ENCODE measurements at regions of chr14 and their contacts with region 1.

Region 1: DNA sequence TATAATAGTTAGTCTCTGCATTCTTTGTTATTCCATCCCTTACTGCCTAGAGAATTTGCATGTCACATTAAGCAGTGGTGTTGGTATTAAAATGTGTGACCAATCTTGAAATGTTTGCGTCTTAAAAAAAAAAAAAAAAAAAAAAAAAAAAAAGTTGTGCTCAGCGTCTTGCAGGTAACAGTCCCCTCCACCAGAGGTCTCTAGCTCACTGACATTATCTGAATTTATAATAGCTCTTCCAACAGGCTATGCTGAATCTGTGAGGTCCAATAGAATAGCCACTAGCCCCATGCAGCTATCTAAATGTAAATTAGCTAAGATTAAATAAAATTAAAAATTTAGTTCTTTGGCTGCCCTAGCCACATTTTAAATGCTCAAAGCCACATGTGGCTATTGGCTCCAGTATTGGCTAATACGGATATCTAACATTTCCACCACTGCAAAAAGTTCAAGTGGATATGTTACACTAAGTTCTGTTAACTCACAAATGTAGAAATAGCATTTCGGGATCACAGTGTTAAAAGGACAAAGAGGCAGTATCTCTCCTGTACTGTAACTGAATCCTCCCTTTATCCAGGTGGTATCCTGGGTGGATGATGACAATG is 28.7 kb downstream of the NKX2-8 start:
- DNase-seq: peak; percentile 61
- H3K4me3 Mint-ChIP-seq: no peak overlapping the region
- H3K27ac Mint-ChIP-seq: no peak overlapping the region
- H3K4me1 Mint-ChIP-seq: peaks cover 5% of the 10 kb centered on the region
- H3K27me3 Mint-ChIP-seq: no peaks in the 10 kb centered on the region
- CTCF ChIP-seq: peak; percentile 56

Region 2: DNA sequence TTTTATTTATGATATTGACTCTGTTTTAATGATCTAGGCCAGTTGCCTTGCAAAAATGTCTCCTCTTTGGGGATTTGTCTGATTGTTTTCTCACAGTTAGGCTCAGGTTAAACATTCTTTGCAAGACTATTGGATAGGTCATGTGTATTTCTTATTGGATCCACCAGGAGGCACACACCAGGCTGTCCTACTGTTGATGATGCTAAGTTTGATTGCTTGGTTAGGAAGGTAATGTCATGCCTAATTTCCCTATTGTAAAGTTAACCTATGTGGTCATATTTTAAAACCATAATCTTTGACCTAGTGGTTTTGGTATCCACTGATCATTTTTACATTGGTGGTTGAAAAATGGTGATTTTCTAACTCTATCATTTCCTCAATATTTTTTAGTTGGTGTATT is 590.5 kb before region 1 on chr14:
- CTCF ChIA-PET with region 1: interaction called, 3 read pairs
- POLR2A ChIA-PET with region 1: no interaction called
- intact Hi-C with region 1: loop called (anchors 5 kb)
- DNase-seq: peak; percentile 32
- H3K4me3 Mint-ChIP-seq: no peak overlapping the region
- H3K27ac Mint-ChIP-seq: no peak overlapping the region
- H3K4me1 Mint-ChIP-seq: no peaks in the 10 kb centered on the region
- H3K27me3 Mint-ChIP-seq: no peaks in the 10 kb centered on the region
- CTCF ChIP-seq: peak; percentile 21

Region 3: GRCh38 chr14:36207500-36207899 is 346.3 kb before region 1 on chr14:
- CTCF ChIA-PET with region 1: no interaction called
- POLR2A ChIA-PET with region 1: no interaction called
- intact Hi-C with region 1: loop called (anchors 1 kb)
- DNase-seq: peak; percentile 22
- H3K4me3 Mint-ChIP-seq: no peak overlapping the region
- H3K27ac Mint-ChIP-seq: no peak overlapping the region
- H3K4me1 Mint-ChIP-seq: no peaks in the 10 kb centered on the region
- H3K27me3 Mint-ChIP-seq: no peaks in the 10 kb centered on the region
- CTCF ChIP-seq: peak; percentile 48

Region 4: GRCh38 chr14:36281309-36281708 is 272.4 kb before region 1 on chr14:
- CTCF ChIA-PET with region 1: no interaction called
- POLR2A ChIA-PET with region 1: no interaction called
- intact Hi-C with region 1: no loop called
- DNase-seq: no peak
- H3K4me3 Mint-ChIP-seq: no peak overlapping the region
- H3K27ac Mint-ChIP-seq: no peak overlapping the region
- H3K4me1 Mint-ChIP-seq: no peaks in the 10 kb centered on the region
- H3K27me3 Mint-ChIP-seq: peaks cover 12% of the 10 kb centered on the region
- CTCF ChIP-seq: no peak

Region 5: DNA sequence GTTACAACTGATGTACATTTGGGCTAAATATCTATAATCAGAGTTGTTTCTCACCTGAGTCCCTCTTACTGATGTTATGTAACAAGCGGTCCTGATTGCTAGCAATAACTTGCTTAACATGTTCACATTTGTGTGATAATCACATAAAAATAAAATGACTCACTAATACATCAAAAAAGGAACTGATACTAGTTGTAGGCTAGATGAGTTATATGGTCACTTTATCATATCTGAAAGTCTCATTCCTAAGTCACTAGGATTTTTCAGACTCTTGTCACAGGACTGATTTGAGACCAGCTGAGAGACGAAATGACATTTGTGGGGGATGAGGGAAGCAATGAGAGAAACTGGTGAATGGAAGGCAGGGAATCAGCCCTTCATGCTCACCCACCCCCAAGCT is 68.0 kb before region 1 on chr14:
- CTCF ChIA-PET with region 1: no interaction called
- POLR2A ChIA-PET with region 1: no interaction called
- intact Hi-C with region 1: no loop called
- DNase-seq: no peak
- H3K4me3 Mint-ChIP-seq: no peak overlapping the region
- H3K27ac Mint-ChIP-seq: no peak overlapping the region
- H3K4me1 Mint-ChIP-seq: no peaks in the 10 kb centered on the region
- H3K27me3 Mint-ChIP-seq: peaks cover 85% of the 10 kb centered on the region
- CTCF ChIP-seq: no peak

Region 6: DNA sequence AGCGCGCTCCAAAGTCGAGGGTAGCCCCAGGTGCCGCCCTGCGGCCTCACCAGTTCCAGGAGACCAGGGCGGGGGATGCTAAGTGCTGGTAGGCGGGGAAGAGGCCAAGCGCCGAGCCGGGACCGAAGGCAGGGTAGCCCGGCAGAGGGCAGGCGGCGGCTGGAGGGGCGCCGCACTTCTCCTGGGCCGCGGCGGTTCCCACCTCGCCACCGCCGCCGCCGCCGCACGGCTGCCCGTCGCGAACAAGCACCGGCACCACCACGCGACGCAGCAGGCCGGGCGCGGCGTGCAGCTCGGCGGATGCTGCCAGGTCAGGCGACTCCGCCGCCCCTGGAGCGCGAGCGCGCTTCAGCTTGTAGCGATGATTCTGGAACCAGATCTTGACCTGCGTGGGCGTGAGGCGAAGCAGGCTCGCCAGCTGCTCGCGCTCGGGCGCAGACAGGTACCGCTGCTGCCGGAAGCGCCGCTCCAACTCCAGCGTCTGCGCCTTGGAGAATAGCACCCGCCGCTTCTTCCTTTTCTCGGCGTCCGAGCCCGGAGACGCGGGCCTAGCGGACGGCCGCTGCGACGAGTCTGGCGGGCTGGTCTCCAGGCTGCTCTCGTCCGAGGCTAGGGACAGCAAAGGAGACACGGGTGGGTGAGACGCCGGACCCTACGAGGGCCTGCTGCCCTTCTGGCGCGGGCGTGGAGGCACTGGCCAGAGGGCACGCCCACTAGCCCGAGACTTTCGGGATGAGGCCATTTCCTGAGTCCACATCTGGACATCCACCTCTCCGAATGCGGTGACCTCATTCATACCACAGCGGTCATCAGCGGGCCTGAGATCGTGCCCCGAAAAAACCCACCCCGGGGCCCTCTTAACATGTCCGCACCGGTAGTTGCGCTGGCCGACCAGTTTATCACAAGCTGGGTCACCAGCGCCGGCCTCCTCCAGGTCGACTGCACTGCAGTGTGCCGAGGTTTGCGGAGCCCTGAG is 27.4 kb after region 1 on chr14:
- CTCF ChIA-PET with region 1: interaction called, 36 read pairs
- POLR2A ChIA-PET with region 1: interaction called, 4 read pairs
- intact Hi-C with region 1: no loop called
- DNase-seq: peak; percentile 65
- H3K4me3 Mint-ChIP-seq: peak overlapping the region; percentile 75
- H3K27ac Mint-ChIP-seq: no peak overlapping the region
- H3K4me1 Mint-ChIP-seq: no peaks in the 10 kb centered on the region
- H3K27me3 Mint-ChIP-seq: no peaks in the 10 kb centered on the region
- CTCF ChIP-seq: no peak

Region 7: GRCh38 chr14:36604757-36605505 is 51.2 kb after region 1 on chr14:
- CTCF ChIA-PET with region 1: interaction called, 157 read pairs
- POLR2A ChIA-PET with region 1: interaction called, 10 read pairs
- intact Hi-C with region 1: loop called (anchors 1 kb)
- DNase-seq: peak; percentile 90
- H3K4me3 Mint-ChIP-seq: no peak overlapping the region
- H3K27ac Mint-ChIP-seq: no peak overlapping the region
- H3K4me1 Mint-ChIP-seq: peaks cover 12% of the 10 kb centered on the region
- H3K27me3 Mint-ChIP-seq: no peaks in the 10 kb centered on the region
- CTCF ChIP-seq: peak; percentile 63

Region 8: DNA sequence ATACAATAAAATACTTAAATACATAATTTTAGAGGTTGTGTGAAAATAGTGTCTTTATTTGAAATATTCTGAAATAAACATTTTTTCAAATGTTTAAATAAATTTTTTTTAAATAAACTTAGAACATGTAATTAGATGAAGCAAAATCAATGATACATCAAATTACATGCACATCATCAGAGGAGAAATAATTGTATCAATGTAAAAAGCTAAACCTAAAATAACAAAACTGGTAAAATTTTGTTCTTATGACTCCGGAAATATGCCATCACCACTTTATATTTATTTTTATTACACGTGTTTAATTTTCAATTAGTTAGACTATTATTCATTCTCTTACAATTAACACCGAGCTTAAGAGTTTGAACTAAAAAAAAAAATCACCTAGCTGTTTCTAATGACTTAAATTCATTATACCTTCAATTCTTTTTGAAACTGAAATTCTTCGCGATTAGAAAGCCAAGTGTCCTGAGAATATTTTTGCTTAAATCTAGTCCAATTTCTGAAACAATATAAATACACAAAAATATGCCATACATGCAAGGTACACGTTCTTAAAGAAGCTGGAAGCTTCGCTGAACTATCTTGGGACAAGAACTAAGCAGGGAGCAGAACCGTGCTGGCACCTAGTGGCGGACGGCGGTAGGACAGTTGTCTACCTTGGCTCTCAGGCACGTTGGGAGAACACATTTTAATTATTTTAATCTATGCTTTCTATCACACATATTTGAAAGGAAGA is 388.2 kb after region 1 on chr14:
- CTCF ChIA-PET with region 1: interaction called, 57 read pairs
- POLR2A ChIA-PET with region 1: interaction called, 5 read pairs
- intact Hi-C with region 1: loop called (anchors 2 kb)
- DNase-seq: peak; percentile 78
- H3K4me3 Mint-ChIP-seq: no peak overlapping the region
- H3K27ac Mint-ChIP-seq: peak overlapping the region; percentile 96
- H3K4me1 Mint-ChIP-seq: peaks cover 24% of the 10 kb centered on the region
- H3K27me3 Mint-ChIP-seq: no peaks in the 10 kb centered on the region
- CTCF ChIP-seq: peak; percentile 90

Region 9: DNA sequence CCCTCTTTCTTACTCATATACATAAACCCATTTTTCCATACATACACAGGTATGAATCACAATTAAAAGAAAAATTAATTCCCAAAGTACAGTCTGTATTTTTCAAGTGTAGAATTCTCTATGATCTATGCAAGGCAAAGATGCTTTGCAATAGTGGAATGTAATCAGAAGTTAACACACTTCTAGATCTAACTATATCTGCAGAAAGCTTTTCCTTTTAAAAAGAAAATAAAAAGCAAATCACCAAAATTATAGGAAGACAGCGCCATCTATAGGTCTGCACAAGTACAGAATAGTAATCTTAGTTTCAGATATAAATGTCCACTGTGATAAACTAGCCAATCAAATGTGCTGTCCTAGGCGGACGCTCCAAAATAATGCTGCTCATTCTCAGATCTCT is 596.7 kb after region 1 on chr14:
- CTCF ChIA-PET with region 1: interaction called, 117 read pairs
- POLR2A ChIA-PET with region 1: interaction called, 3 read pairs
- intact Hi-C with region 1: loop called (anchors 1 kb)
- DNase-seq: peak; percentile 63
- H3K4me3 Mint-ChIP-seq: no peak overlapping the region
- H3K27ac Mint-ChIP-seq: peak overlapping the region; percentile 16
- H3K4me1 Mint-ChIP-seq: peaks cover 14% of the 10 kb centered on the region
- H3K27me3 Mint-ChIP-seq: no peaks in the 10 kb centered on the region
- CTCF ChIP-seq: peak; percentile 54

Measured in MCF 10A (cell line).